ENCODE measurements at regions of chr12 and their contacts with region 1.

Region 1: DNA sequence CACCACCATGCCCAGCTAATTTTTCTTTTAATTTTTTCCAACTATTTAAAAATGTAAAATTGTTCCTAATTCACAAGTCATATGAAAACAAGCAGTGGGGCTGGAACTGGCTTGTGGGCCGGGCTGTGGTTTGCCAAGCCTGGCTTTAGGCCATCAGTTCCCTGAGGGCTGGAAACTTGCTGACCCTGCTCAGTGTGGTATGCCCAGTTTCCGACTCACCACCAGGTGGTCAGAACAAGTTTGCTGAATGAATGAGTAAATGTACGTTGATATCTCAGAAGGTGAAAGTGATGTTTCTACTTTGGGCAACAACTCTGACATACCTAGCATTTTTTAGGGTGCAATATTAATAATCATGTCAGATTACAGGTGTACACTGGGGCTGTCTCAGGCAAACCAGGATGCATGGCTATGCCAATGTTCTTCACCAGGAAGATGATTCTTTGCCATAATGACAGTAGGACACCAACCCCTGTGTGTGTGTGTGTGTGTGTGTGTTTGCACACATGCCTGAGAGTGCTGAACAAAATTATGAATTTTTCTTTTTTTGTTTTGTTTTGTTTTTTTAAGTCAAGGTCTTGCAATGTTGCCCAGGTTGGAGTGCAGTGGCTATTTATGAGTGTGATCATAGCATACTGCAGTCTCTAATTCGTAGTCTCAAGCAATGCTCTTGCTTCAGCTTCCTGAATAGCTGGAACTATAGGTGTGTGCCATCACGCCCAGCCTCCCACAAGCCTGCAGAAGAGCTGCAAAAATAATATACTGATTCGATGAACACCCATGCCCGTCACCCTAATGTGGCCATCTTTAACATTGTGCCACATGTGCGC is 106.1 kb downstream of the PTPN11 start:
- DNase-seq: peak; percentile 80 to 88
- H3K4me3 ChIP-seq: no peak overlapping the region
- H3K27ac ChIP-seq: no peak overlapping the region
- H3K4me1 ChIP-seq: no peaks in the 10 kb centered on the region; the same call in 1 of the 2 replicates
- H3K27me3 ChIP-seq: no peaks in the 10 kb centered on the region
- CTCF ChIP-seq: no peak; the same call in 1 of the 2 replicates

Region 2: GRCh38 chr12:112537710-112538396 is 13.0 kb after region 1 on chr12:
- CTCF ChIA-PET with region 1: interaction called, 10 read pairs
- POLR2A ChIA-PET with region 1: interaction called, 15 read pairs
- intact Hi-C with region 1: no loop called
- DNase-seq: peak; percentile 76 to 81
- H3K4me3 ChIP-seq: no peak overlapping the region
- H3K27ac ChIP-seq: no peak overlapping the region
- H3K4me1 ChIP-seq: 0 out of 2 replicates have a peak, but pooled peaks cover 4% of the 10 kb centered on the region
- H3K27me3 ChIP-seq: no peaks in the 10 kb centered on the region; the same call in 1 of the 2 replicates
- CTCF ChIP-seq: no peak

Region 3: DNA sequence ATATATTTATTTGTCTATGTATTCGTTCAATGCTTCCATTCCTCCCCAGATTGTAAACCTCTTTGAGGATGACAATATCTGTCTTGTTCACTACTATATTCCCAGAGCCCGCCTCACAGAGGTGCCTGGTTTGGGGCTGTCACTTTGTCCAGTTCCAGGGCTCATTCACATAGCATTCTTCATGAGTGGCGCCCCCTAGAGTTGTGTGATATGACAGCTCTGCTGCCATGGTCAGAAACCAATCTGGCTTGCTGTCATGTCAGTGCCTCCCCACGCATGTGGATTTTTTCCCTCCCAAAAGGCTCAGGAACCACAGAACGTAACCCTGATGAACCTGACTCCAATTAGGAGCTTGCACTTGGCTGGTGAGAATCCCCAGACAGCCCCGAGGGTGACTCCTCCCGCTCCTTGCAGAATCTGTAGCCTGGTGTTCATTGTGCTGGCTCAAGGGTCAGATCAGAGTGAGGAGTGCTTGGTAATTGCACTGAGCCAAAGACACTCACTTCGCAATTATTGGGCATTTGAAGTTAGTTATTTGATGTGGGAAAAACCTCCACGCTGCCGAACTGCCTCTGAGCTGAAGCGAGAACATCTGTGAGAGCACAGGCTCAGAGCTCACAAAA is 39.4 kb after region 1 on chr12:
- CTCF ChIA-PET with region 1: no interaction called
- POLR2A ChIA-PET with region 1: no interaction called
- intact Hi-C with region 1: no loop called
- DNase-seq: no peak
- H3K4me3 ChIP-seq: no peak overlapping the region
- H3K27ac ChIP-seq: no peak overlapping the region
- H3K4me1 ChIP-seq: no peaks in the 10 kb centered on the region
- H3K27me3 ChIP-seq: peaks cover 92% of the 10 kb centered on the region
- CTCF ChIP-seq: 0 out of 2 replicates have a peak, but pooled peaks have one; percentile 26

Region 4: GRCh38 chr12:112590281-112590680 is 65.4 kb after region 1 on chr12:
- CTCF ChIA-PET with region 1: no interaction called
- POLR2A ChIA-PET with region 1: no interaction called
- intact Hi-C with region 1: no loop called
- DNase-seq: no peak
- H3K4me3 ChIP-seq: no peak overlapping the region
- H3K27ac ChIP-seq: no peak overlapping the region
- H3K4me1 ChIP-seq: no peaks in the 10 kb centered on the region
- H3K27me3 ChIP-seq: peaks cover 45% of the 10 kb centered on the region
- CTCF ChIP-seq: no peak

Region 5: DNA sequence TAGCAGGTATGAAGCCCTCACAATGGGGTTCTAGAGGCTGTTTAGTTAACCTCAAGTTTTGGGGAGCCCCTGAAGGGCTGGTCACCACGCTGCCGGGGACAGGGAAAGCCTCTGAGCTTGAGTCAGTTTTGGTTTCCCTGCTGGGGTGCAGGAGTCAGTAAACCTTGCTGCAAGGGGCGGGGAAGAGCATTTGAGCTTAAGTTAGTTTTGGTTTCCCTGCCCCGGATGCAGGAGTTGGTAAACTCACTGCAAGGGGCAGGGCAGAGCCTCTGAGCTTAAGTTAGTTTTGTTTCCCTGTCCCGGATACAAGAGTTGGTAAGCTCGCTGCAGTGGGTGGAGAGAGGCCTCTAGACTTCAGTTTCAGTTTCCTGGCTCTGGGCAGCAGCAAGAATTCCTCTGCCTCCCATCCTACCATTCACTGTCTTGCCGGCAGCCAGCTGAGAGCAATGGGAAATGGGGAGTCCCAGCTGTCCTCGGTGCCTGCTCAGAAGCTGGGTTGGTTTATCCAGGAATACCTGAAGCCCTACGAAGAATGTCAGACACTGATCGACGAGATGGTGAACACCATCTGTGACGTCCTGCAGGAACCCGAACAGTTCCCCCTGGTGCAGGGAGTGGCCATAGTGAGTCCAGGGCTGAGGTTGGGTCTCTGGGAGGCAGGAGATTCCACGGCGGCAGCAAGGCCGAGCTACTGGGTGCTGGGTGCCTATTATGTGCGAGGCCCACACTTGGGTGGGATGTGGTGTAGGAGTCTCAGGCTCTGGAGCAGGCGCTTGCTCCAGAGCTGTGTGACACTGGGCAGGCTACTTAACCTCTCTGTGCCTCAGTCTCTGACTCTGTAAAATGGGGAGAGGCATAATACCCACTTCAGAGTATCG is 453.5 kb after region 1 on chr12 and contains the start of gene OAS2:
- CTCF ChIA-PET with region 1: no interaction called
- POLR2A ChIA-PET with region 1: no interaction called
- intact Hi-C with region 1: no loop called
- DNase-seq: peak in 1 of 2 experiments; percentile 31
- H3K4me3 ChIP-seq: no peak within 1 kb of the TSS
- H3K27ac ChIP-seq: no peak within 1 kb of the TSS
- H3K4me1 ChIP-seq: no peaks in the 10 kb centered on the region
- H3K27me3 ChIP-seq: peaks cover 5% of the 10 kb centered on the region; the same call in 1 of the 2 replicates
- CTCF ChIP-seq: no peak
- total RNA-seq, gene OAS2: 0.98 and 1.3 TPM in 2 replicates

Measured in PC-9 (cell line).